GM10248 (cell line): ENCODE measurements at regions of chr3 and their contacts with region 1.

Region 1: GRCh38 chr3:63993653-63994079 is 29.6 kb downstream of the PSMD6 start:
- DNase-seq: peak; percentile 70
- CTCF ChIP-seq: peak; percentile 89

Region 2: GRCh38 chr3:63967675-63968611 is 25.7 kb before region 1 on chr3:
- CTCF ChIA-PET with region 1: interaction called, 42 read pairs
- POLR2A ChIA-PET with region 1: no interaction called
- DNase-seq: no peak
- CTCF ChIP-seq: no peak

Region 3: DNA sequence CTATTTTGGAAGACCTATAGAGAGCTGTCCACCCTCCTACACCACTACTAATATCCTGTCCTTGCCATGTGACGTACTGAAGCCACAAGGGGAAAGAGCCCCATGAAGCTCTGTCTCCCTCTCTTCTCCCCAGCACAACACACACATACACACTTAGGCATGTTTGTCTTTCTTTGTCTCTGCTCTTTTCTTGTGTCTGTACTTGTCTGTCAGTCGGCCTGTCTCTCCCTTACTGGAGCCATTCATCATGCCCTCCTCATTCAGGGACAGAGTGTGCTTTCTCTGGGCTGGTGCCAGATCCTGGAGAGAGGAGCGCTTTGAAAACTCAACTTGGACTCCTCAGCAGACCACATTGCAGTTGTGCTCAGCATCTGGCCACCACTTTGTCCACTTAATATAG is 17.9 kb before region 1 on chr3:
- CTCF ChIA-PET with region 1: interaction called, 82 read pairs
- POLR2A ChIA-PET with region 1: no interaction called
- DNase-seq: no peak
- CTCF ChIP-seq: no peak

Region 4: GRCh38 chr3:64011685-64012084 is 18.0 kb after region 1 on chr3:
- CTCF ChIA-PET with region 1: interaction called, 25 read pairs
- POLR2A ChIA-PET with region 1: no interaction called
- DNase-seq: no peak
- CTCF ChIP-seq: no peak

Region 5: GRCh38 chr3:64176461-64176996 is 182.9 kb after region 1 on chr3:
- CTCF ChIA-PET with region 1: no interaction called
- POLR2A ChIA-PET with region 1: no interaction called
- DNase-seq: no peak
- CTCF ChIP-seq: no peak